ENCODE measurements at regions of chr2 and their contacts with region 1.

Region 1: GRCh38 chr2:204842661-204843485 is 297.6 kb downstream of the PARD3B start:
- DNase-seq: peak; percentile 84
- ATAC-seq: peak; percentile 93
- H3K4me3 ChIP-seq: peak overlapping the region; percentile 25; the same call in 1 of the 2 replicates
- H3K27ac ChIP-seq: peak overlapping the region; percentile 57
- H3K4me1 ChIP-seq: peaks cover 28% of the 10 kb centered on the region
- H3K27me3 ChIP-seq: no peaks in the 10 kb centered on the region
- CTCF ChIP-seq: no peak

Region 2: DNA sequence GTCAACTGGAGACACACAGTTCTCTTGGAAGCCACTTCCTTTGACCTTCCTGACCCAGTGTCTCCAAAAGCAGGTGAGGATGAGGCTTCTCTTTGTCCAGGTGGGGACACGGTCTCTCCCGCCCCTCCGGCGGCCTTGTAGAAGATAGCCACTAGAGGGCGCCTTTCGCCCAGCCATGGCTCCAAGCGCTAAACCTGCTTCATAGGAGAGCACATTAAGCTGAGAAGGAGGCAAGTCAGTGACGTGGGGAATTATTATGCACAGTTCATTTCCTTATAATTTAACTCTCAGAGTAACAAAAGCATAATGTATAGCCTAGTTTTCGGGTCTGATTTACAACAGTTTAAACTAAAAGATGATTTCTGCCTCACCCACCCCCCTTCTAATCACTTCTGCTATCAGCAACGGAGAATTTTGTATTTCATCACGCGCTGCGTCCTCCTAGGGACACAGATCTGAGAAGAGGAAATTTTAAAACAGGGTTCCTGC is 697.6 kb before region 1 on chr2:
- CTCF ChIA-PET with region 1: no interaction called
- POLR2A ChIA-PET with region 1: no interaction called
- intact Hi-C with region 1: loop called (anchors 10 kb)
- DNase-seq: peak; percentile 87
- ATAC-seq: peak; percentile 99
- H3K4me3 ChIP-seq: peak overlapping the region; percentile 68
- H3K27ac ChIP-seq: no peak overlapping the region
- H3K4me1 ChIP-seq: no peaks in the 10 kb centered on the region
- H3K27me3 ChIP-seq: peaks cover 64% of the 10 kb centered on the region
- CTCF ChIP-seq: peak; percentile 98

Region 3: GRCh38 chr2:204738721-204739120 is 104.2 kb before region 1 on chr2:
- CTCF ChIA-PET with region 1: no interaction called
- POLR2A ChIA-PET with region 1: interaction called, 4 read pairs
- intact Hi-C with region 1: loop called (anchors 5 kb)
- DNase-seq: no peak
- ATAC-seq: no peak
- H3K4me3 ChIP-seq: no peak overlapping the region
- H3K27ac ChIP-seq: no peak overlapping the region
- H3K4me1 ChIP-seq: no peaks in the 10 kb centered on the region
- H3K27me3 ChIP-seq: no peaks in the 10 kb centered on the region
- CTCF ChIP-seq: no peak

Region 4: GRCh38 chr2:204796581-204796980 is 46.3 kb before region 1 on chr2:
- CTCF ChIA-PET with region 1: interaction called, 3 read pairs
- POLR2A ChIA-PET with region 1: no interaction called
- intact Hi-C with region 1: loop called (anchors 5 kb)
- DNase-seq: no peak
- ATAC-seq: no peak
- H3K4me3 ChIP-seq: no peak overlapping the region
- H3K27ac ChIP-seq: no peak overlapping the region
- H3K4me1 ChIP-seq: peaks cover 11% of the 10 kb centered on the region
- H3K27me3 ChIP-seq: no peaks in the 10 kb centered on the region
- CTCF ChIP-seq: no peak

Measured in PC-3 (cell line).